ENCODE measurements at regions of chr6 and their contacts with region 1.

Region 1: GRCh38 chr6:72464791-72465691 is 156.8 kb upstream of the KCNQ5 start:
- DNase-seq: peak; percentile 88
- H3K4me3 ChIP-seq: no peak overlapping the region
- CTCF ChIP-seq: no peak

Region 2: DNA sequence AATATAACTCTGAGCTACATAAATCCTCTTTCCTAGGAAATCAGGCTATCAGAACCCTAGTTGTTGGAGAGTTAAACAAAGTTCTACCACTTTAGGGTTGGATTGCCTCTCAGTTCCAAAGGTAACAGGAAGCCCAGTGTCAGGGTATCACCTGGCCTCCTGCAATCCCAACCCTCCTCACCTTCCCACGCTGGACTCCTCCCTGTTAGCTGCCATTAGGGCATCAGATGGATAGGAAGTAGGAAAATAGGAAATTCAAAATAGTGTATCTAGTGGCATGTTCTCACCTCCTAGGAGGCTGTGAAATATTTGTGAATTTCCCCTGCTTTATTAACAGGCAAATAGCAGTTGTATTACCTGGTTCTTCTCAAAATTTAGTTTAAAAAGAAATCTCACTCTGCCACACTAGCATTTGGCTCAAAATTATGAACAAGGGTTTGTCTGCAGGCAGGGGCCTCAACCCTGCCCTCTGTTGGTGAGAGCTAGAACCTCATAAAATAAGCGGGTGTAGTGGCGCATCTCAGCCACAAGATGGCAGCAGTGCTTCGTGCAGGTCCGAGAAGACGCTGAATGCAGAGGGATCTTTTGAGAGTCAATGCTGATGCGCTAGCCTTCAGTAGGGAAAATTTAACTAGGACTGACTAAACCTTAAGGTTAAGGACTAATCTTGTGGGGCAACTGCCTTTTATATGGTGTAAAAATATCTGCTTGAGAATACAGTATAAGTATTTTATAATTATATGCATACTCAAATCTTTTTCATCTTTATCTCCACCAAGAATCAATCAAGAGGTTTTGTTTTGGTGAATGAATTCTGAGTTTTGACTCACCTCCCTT is 53.0 kb before region 1 on chr6:
- in situ Hi-C with region 1: no loop called
- DNase-seq: peak; percentile 64
- H3K4me3 ChIP-seq: no peak overlapping the region
- CTCF ChIP-seq: peak; percentile 100

Region 3: GRCh38 chr6:72422171-72422570 is 42.9 kb before region 1 on chr6:
- in situ Hi-C with region 1: loop called (anchors 5 kb)
- DNase-seq: no peak
- H3K4me3 ChIP-seq: no peak overlapping the region
- CTCF ChIP-seq: no peak

Measured in astrocyte of the cerebellum (primary cell).